ENCODE measurements at regions of chr10 and their contacts with region 1.

Region 1: DNA sequence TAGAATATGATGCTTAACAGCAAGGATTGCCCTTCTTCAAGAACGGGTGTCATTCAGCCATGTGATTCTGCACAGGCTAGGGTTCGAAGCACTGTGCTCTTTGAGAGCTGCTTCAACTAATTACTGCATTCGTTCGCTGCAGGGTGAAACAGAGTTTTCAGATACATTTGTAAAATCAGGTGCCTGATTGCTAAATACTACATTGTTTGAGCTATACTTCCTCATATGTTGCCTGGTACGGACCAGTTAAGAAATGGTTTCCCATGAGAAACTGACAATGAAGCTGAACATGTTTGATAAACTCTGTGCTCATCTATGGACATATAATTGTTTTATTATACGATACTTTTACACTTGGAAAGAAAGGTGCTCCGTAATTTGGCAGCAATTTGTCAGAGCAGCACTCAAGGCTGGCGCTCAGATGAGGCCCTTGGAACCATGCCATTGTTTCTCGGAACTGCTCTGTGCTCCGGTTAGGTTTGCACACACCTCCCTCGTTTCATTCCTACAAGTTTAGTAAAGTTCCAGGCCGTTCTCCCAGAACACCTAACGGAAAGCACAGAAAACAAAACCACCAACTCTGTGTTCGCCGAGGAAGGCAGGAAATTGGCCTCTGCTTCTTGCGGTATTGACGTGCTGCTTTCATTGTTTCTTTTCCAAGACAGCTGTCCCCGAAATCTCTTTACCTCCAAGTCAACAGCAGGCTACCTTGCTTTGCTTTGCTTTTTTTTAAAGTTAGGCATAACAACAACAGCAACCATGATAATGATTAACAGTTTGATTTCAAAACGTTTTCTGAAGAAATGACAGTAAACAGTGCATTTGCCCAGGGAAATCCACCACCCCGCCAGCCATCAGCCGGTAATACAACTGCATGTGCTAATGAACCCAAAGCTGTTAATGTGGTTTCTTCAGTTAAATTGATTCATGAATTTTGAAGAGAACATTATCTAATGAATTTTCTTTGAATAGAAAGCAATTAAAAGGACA is 206.9 kb downstream of the EBF3 start:
- DNase-seq: peak; percentile 53 to 61
- H3K4me3 ChIP-seq: peak overlapping the region in 2 of 3 donors; percentile 21 to 43
- H3K27ac ChIP-seq: peak overlapping the region; percentile 38 to 45
- H3K4me1 ChIP-seq: no peaks in the 10 kb centered on the region
- H3K27me3 ChIP-seq: no peaks in the 10 kb centered on the region
- CTCF ChIP-seq: no peak
- POLR2A ChIP-seq: no peak

Region 2: GRCh38 chr10:129685271-129685670 is 71.9 kb before region 1 on chr10:
- intact Hi-C with region 1: loop called (anchors 2 kb)
- DNase-seq: no peak
- H3K4me3 ChIP-seq: no peak overlapping the region
- H3K27ac ChIP-seq: no peak overlapping the region
- H3K4me1 ChIP-seq: peaks cover 0 to under 1% of the 10 kb centered on the region in 2 donors
- H3K27me3 ChIP-seq: no peaks in the 10 kb centered on the region
- CTCF ChIP-seq: no peak
- POLR2A ChIP-seq: no peak

Region 3: DNA sequence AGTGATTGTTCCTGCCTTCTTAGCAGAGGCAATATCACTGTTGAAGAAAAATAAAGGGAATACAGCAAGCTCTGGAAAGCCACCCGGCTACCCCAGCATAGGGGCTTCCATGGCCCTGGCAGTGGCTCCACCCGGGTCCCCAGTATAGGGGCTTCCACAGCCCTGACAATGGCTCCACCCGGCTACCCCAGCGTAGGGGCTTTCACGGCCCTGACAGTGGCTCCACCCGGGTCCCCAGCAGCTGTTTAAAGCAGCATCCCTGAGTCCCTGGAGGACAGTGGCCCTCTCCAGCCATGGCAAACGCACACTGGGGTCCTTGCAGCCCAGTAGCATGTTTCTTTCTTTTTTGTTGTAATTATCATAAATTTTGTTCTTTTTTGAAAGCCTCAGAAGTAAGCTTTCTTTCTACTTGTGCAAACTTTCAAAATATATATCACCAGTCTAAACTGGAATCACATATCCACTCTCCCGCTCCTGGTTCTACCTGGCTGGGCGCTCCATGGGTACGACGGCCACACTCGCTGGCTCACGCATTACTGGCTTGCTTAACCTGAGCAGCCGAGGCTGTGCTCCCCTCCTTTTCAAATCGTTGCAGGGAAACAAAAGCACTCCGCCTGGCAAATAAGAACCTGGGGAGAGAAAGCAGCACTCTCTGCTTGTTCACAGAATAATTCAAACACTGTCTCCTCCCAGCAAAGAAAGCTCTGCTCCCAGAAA is 1492.2 kb after region 1 on chr10:
- intact Hi-C with region 1: loop called (anchors 5 kb)
- DNase-seq: no peak
- H3K4me3 ChIP-seq: no peak overlapping the region
- H3K27ac ChIP-seq: no peak overlapping the region
- H3K4me1 ChIP-seq: no peaks in the 10 kb centered on the region
- H3K27me3 ChIP-seq: peaks cover 0 to 47% of the 10 kb centered on the region in 2 donors
- CTCF ChIP-seq: no peak
- POLR2A ChIP-seq: no peak

Measured in breast epithelium (tissue), 4 donors.